ENCODE measurements at regions of chr20 and their contacts with region 1.

Region 1: GRCh38 chr20:34069341-34070078 is 42.5 kb downstream of the EIF2S2 start:
- DNase-seq: peak; percentile 53 to 70 (median 63)
- ATAC-seq: peak; percentile 86 to 94 (median 90)
- H3K4me3 ChIP-seq: no peak overlapping the region
- H3K27ac ChIP-seq: no peak overlapping the region
- H3K4me1 ChIP-seq: peaks cover 0 to 10% (median 2%) of the 10 kb centered on the region in 4 donors
- H3K27me3 ChIP-seq: no peaks in the 10 kb centered on the region
- CTCF ChIP-seq: peak; percentile 89 to 93 (median 89)
- POLR2A ChIP-seq: no peak

Region 2: GRCh38 chr20:33915726-33916331 is 153.7 kb before region 1 on chr20:
- intact Hi-C with region 1: loop called in 1 of 2 experiments (anchors 10 kb)
- DNase-seq: peak; percentile 54 to 64 (median 61)
- ATAC-seq: peak; percentile 85 to 91 (median 88)
- H3K4me3 ChIP-seq: no peak overlapping the region
- H3K27ac ChIP-seq: no peak overlapping the region
- H3K4me1 ChIP-seq: no peaks in the 10 kb centered on the region
- H3K27me3 ChIP-seq: no peaks in the 10 kb centered on the region
- CTCF ChIP-seq: peak; percentile 49 to 73 (median 68)
- POLR2A ChIP-seq: no peak

Region 3: GRCh38 chr20:33936656-33937055 is 132.9 kb before region 1 on chr20:
- intact Hi-C with region 1: loop called in 1 of 2 experiments (anchors 5 kb)
- DNase-seq: no peak
- ATAC-seq: no peak
- H3K4me3 ChIP-seq: no peak overlapping the region
- H3K27ac ChIP-seq: no peak overlapping the region
- H3K4me1 ChIP-seq: no peaks in the 10 kb centered on the region
- H3K27me3 ChIP-seq: no peaks in the 10 kb centered on the region
- CTCF ChIP-seq: no peak
- POLR2A ChIP-seq: no peak

Region 4: GRCh38 chr20:34129518-34130162 is 60.1 kb after region 1 on chr20:
- intact Hi-C with region 1: loop called in 1 of 2 experiments (anchors 10 kb)
- DNase-seq: peak in 2 of 3 donors; percentile 48 to 61
- ATAC-seq: peak; percentile 97 to 99 (median 98)
- H3K4me3 ChIP-seq: no peak overlapping the region
- H3K27ac ChIP-seq: no peak overlapping the region
- H3K4me1 ChIP-seq: no peaks in the 10 kb centered on the region
- H3K27me3 ChIP-seq: no peaks in the 10 kb centered on the region
- CTCF ChIP-seq: peak; percentile 80 to 87 (median 84)
- POLR2A ChIP-seq: no peak

Region 5: GRCh38 chr20:34473262-34473883 is 403.9 kb after region 1 on chr20:
- intact Hi-C with region 1: no loop called
- DNase-seq: peak in 2 of 3 donors; percentile 46 to 60
- ATAC-seq: peak; percentile 51 to 62 (median 58)
- H3K4me3 ChIP-seq: no peak overlapping the region
- H3K27ac ChIP-seq: no peak overlapping the region
- H3K4me1 ChIP-seq: peaks cover 0 to 7% (median 5%) of the 10 kb centered on the region in 4 donors
- H3K27me3 ChIP-seq: no peaks in the 10 kb centered on the region
- CTCF ChIP-seq: peak; percentile 14 to 46 (median 26)
- POLR2A ChIP-seq: no peak

Measured in right lobe of liver (tissue), 6 donors.